Right lobe of liver (tissue), 6 donors: ENCODE measurements at regions of chr9 and their contacts with region 1.

Region 1: DNA sequence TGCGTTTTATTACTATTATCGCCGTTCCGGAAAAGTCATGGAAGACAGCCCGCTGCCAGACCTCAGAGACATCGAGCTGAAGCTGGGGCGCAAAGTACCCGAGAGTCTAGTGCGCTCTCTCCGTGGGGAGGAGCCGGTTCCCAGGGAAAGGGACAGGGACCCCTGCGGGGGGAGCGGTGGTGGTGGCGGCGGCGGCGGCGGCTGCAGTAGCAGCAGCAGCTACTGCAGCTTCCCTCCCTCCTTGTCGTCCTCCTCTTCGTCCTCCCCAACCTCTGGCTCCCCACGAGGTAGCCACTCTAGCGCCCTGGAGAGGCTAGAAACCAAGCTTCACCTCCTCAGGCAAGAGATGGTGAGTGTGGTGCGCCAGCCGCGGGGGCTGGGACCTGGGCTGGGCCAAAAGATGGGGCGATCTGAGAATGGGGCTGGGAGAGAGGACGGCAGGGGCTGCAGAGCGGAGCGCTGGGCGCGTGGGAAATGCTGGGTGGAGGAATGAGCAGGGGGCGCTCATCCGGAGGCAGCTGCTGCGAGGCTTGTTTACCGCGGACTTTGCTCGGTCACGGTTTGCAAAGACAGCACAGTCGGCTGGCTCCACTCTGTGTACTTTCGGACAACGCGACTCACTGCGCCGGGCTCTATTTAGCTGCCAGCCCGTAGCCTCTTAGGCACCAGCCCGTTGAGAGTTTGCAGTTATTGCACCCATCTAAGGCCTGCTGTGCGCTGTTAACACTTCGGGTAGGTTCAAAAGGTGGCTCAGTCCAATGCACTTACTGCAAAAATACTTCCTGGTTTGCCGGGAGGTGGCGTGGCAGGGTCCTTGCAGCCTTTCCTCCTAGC is 1.1 kb downstream of the LURAP1L start:
- DNase-seq: peak; percentile 83 to 93 (median 91)
- ATAC-seq: peak; percentile 77 to 92 (median 84)
- H3K4me3 ChIP-seq: peak overlapping the region; percentile 52 to 73 (median 66)
- H3K27ac ChIP-seq: peak overlapping the region; percentile 94 to 99 (median 95)
- H3K4me1 ChIP-seq: peaks cover 0 to 35% (median 0%) of the 10 kb centered on the region in 4 donors
- H3K27me3 ChIP-seq: no peaks in the 10 kb centered on the region
- CTCF ChIP-seq: peak; percentile 30 to 51 (median 39)
- POLR2A ChIP-seq: peak; percentile 91

Region 2: GRCh38 chr9:12819436-12820185 is 43.7 kb after region 1 on chr9:
- intact Hi-C with region 1: loop called in 1 of 2 experiments (anchors 5 kb)
- DNase-seq: no peak
- ATAC-seq: peak; percentile 10 to 71 (median 36)
- H3K4me3 ChIP-seq: no peak overlapping the region
- H3K27ac ChIP-seq: peak overlapping the region; percentile 20 to 94 (median 86)
- H3K4me1 ChIP-seq: peaks cover 0 to 49% (median 16%) of the 10 kb centered on the region in 4 donors
- H3K27me3 ChIP-seq: no peaks in the 10 kb centered on the region
- CTCF ChIP-seq: peak; percentile 42 to 65 (median 62)
- POLR2A ChIP-seq: no peak